Endothelial cell of umbilical vein (primary cell): ENCODE measurements at regions of chr1 and their contacts with region 1.

Region 1: GRCh38 chr1:183609313-183609712 is 19.1 kb upstream of the NCF2 start:
- DNase-seq: peak; percentile 45
- H3K4me3 ChIP-seq: no peak overlapping the region
- H3K27ac ChIP-seq: no peak overlapping the region
- H3K4me1 ChIP-seq: peaks cover 16% of the 10 kb centered on the region
- H3K27me3 ChIP-seq: no peaks in the 10 kb centered on the region
- CTCF ChIP-seq: peak; percentile 47 to 50
- POLR2A ChIP-seq: no peak

Region 2: DNA sequence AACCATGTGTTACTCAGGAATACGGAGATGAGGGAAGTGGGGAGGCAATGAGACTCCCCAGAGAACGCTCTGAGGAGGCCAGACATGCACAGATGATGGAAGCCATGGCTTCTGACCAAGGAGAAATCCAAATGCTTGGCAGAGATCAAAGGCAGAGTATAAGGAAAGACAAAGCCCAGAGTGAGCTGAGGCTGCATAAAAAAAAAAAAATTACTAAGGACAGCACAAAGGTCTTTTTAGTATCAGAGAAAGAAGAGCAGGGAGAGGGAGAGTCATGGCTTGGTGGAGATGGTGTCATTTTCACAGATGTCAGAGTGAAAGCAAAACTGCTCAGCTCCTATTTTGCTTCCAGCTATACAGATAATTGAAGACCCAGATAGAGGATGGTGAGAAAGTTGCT is 10.9 kb before region 1 on chr1:
- CTCF ChIA-PET with region 1: interaction called, 11 read pairs
- POLR2A ChIA-PET with region 1: no interaction called
- dilution Hi-C with region 1: no loop called
- intact Hi-C with region 1: no loop called
- DNase-seq: no peak
- H3K4me3 ChIP-seq: no peak overlapping the region
- H3K27ac ChIP-seq: no peak overlapping the region
- H3K4me1 ChIP-seq: no peaks in the 10 kb centered on the region
- H3K27me3 ChIP-seq: peaks cover 2 to 8% of the 10 kb centered on the region in 2 experiments
- CTCF ChIP-seq: no peak
- POLR2A ChIP-seq: no peak

Region 3: DNA sequence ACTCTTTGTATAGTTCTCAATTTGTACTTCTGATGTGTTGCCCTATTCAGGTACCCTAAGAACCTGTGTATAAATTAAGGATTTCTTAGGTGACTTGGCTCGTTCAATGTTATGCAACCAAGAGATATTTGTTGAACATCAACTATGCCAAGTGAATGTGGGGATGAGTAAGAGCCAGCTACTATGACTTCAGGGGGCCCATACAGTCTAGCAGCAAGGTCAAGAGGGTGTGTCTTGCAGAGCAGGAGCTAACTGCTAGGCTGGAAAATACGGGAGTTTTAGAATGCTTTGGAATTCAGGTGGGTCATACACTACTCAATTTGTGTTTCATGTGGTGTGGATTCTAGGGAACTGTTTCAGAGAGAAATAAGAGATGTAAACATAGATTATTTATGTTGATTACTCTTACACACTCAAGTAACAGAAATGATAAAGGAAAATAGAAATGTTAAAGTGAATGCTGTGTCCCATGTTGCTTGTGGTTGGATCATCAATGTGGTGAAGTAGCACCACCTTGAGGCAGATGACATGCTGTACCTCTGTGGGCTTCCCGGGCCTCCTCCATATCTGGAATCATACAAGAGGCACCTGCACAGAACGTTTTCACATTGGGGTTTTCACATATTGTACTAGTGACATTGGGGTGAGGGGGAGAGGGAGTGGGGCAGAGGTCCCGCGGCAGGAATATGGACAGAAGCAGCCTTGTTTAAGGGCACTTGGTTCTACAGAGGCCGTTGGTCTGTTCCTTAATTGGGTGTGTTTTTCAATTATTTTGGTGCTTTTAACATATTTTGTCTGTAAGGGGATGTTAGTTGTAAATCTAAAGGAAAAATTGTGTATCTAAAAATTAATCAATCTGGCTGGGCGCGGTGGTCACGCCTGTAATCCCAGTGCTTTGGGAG is 13.8 kb after region 1 on chr1:
- CTCF ChIA-PET with region 1: interaction called, 10 read pairs
- POLR2A ChIA-PET with region 1: no interaction called
- dilution Hi-C with region 1: no loop called
- intact Hi-C with region 1: no loop called
- DNase-seq: peak; percentile 56
- H3K4me3 ChIP-seq: no peak overlapping the region
- H3K27ac ChIP-seq: no peak overlapping the region
- H3K4me1 ChIP-seq: peaks cover 4% of the 10 kb centered on the region
- H3K27me3 ChIP-seq: no peaks in the 10 kb centered on the region
- CTCF ChIP-seq: peak; percentile 34 to 45
- POLR2A ChIP-seq: no peak

Region 4: DNA sequence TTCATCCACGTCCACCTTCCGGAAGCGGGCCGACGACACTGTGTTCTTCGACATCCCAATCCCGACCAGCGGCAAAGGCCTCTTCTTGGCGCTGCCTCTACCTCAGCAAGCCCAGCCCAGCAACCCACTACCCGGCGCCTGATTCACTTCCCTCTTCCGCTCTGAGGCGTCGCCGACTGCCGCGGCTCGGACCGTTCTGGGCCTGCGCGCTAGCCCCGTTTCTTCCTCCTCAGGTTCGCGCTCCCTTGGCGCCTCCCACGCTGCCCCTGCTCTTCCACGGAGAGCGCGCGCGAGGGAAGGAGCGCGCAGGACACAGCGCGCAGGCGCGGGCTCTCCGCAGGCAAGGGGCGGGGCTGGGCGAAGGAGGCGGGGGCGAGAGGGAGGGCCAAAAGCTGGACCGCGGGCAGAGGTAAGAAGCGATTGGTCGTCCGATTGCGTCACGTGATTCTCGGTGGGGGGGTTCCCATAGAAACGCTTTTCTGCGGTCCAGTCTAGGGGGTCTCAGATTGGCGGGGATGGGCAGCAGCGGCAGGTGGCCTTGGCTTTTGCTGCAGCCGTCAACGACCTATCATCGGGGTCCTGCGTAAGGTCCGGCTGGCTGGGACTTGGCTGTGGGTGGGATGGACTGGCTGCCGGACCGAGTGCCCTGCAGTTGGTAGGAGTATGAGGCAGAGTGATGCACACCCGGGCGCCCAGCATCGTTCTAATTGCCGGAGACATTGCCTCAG is 26.5 kb after region 1 on chr1 and contains the start of gene ARPC5:
- CTCF ChIA-PET with region 1: interaction called, 15 read pairs
- POLR2A ChIA-PET with region 1: no interaction called
- dilution Hi-C with region 1: no loop called
- intact Hi-C with region 1: no loop called
- DNase-seq: peak; percentile 100
- H3K4me3 ChIP-seq: peak within 1 kb of the TSS; percentile 93 to 100 (median 99)
- H3K27ac ChIP-seq: peak within 1 kb of the TSS; percentile 67
- H3K4me1 ChIP-seq: peaks cover 28% of the 10 kb centered on the region
- H3K27me3 ChIP-seq: no peaks in the 10 kb centered on the region
- CTCF ChIP-seq: no peak
- POLR2A ChIP-seq: peak; percentile 95
- total RNA-seq, gene ARPC5: 185 and 190 TPM in 2 replicates

Region 5: GRCh38 chr1:183646776-183647175 is 37.5 kb after region 1 on chr1:
- CTCF ChIA-PET with region 1: no interaction called
- POLR2A ChIA-PET with region 1: no interaction called
- dilution Hi-C with region 1: no loop called
- intact Hi-C with region 1: no loop called
- DNase-seq: no peak
- H3K4me3 ChIP-seq: no peak overlapping the region
- H3K27ac ChIP-seq: no peak overlapping the region
- H3K4me1 ChIP-seq: peaks cover 7% of the 10 kb centered on the region
- H3K27me3 ChIP-seq: no peaks in the 10 kb centered on the region
- CTCF ChIP-seq: no peak
- POLR2A ChIP-seq: no peak

Region 6: GRCh38 chr1:183841950-183842794 is 232.9 kb after region 1 on chr1:
- CTCF ChIA-PET with region 1: no interaction called
- POLR2A ChIA-PET with region 1: no interaction called
- dilution Hi-C with region 1: no loop called
- intact Hi-C with region 1: no loop called
- DNase-seq: peak; percentile 80
- H3K4me3 ChIP-seq: peak overlapping the region in 1 of 3 experiments; percentile 28
- H3K27ac ChIP-seq: peak overlapping the region; percentile 74
- H3K4me1 ChIP-seq: peaks cover 53% of the 10 kb centered on the region
- H3K27me3 ChIP-seq: no peaks in the 10 kb centered on the region
- CTCF ChIP-seq: no peak
- POLR2A ChIP-seq: no peak